Activated CD4-positive, alpha-beta T cell treated with anti-CD3 and anti-CD28 coated beads for 36 hours (primary cell): ENCODE measurements at regions of chr10 and their contacts with region 1.

Region 1: GRCh38 chr10:14200698-14201544 is 129.8 kb downstream of the FRMD4A start:
- DNase-seq: peak; percentile 41
- ATAC-seq: no peak
- H3K4me3 Mint-ChIP-seq: no peak overlapping the region
- H3K27ac Mint-ChIP-seq: no peak overlapping the region
- H3K4me1 Mint-ChIP-seq: no peaks in the 10 kb centered on the region
- H3K27me3 Mint-ChIP-seq: peaks cover 7% of the 10 kb centered on the region

Region 2: DNA sequence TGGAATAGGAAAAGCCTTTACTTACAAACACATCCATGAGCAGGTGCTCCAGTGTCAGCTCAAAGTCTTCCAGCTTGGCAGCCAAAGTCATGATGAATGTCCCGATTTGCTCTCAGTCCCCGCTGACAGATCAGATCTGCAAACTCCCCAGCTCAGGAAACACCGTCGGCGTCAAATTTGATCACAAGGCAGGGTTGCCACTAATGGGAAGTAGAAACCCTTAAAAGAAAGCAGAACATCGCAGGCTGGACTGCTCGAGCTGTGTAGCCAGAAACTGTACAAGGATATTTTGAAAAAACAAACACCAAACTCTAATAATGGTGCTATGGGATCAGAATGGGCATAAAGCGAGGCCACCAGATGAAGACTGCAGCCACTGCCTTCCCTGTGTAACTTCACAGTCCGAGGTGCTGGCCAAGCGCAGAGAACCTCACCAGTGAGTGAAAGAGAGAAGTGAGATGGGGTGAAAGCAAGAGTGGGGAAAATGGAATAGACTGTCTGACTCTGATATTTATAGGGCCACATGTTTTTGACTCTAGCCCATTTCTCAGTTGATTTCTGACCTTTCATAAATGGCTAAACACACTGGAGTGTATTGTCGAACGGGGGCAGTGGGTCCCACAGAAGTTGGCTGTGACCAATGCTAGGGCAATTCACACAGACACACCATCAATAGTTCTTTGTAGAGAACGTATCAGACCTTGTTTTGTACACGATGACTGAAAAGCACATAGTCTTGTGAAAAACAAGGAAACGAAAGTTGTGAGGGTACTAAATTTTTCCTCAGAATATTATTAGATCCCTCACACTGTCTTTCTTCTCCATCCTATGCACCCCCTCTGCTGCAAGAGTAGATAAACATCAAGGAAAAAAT is 176.4 kb before region 1 on chr10:
- CTCF ChIA-PET with region 1: no interaction called
- POLR2A ChIA-PET with region 1: no interaction called
- intact Hi-C with region 1: no loop called
- DNase-seq: no peak
- ATAC-seq: no peak
- H3K4me3 Mint-ChIP-seq: no peak overlapping the region
- H3K27ac Mint-ChIP-seq: no peak overlapping the region
- H3K4me1 Mint-ChIP-seq: peaks cover 12% of the 10 kb centered on the region
- H3K27me3 Mint-ChIP-seq: peaks cover 4% of the 10 kb centered on the region

Region 3: GRCh38 chr10:14325325-14325955 is 124.5 kb after region 1 on chr10:
- CTCF ChIA-PET with region 1: interaction called, 4 read pairs
- POLR2A ChIA-PET with region 1: no interaction called
- intact Hi-C with region 1: loop called in 1 of 2 experiments (anchors 1 kb)
- DNase-seq: peak; percentile 83
- ATAC-seq: peak; percentile 44
- H3K4me3 Mint-ChIP-seq: no peak overlapping the region
- H3K27ac Mint-ChIP-seq: no peak overlapping the region
- H3K4me1 Mint-ChIP-seq: no peaks in the 10 kb centered on the region
- H3K27me3 Mint-ChIP-seq: peaks cover 32% of the 10 kb centered on the region

Region 4: GRCh38 chr10:14466257-14466656 is 265.3 kb after region 1 on chr10:
- CTCF ChIA-PET with region 1: no interaction called
- POLR2A ChIA-PET with region 1: no interaction called
- intact Hi-C with region 1: loop called in 1 of 2 experiments (anchors 5 kb)
- DNase-seq: no peak
- ATAC-seq: no peak
- H3K4me3 Mint-ChIP-seq: no peak overlapping the region
- H3K27ac Mint-ChIP-seq: no peak overlapping the region
- H3K4me1 Mint-ChIP-seq: no peaks in the 10 kb centered on the region
- H3K27me3 Mint-ChIP-seq: peaks cover 14% of the 10 kb centered on the region